Endothelial cell of umbilical vein (primary cell): ENCODE measurements at regions of chr10 and their contacts with region 1.

Region 1: DNA sequence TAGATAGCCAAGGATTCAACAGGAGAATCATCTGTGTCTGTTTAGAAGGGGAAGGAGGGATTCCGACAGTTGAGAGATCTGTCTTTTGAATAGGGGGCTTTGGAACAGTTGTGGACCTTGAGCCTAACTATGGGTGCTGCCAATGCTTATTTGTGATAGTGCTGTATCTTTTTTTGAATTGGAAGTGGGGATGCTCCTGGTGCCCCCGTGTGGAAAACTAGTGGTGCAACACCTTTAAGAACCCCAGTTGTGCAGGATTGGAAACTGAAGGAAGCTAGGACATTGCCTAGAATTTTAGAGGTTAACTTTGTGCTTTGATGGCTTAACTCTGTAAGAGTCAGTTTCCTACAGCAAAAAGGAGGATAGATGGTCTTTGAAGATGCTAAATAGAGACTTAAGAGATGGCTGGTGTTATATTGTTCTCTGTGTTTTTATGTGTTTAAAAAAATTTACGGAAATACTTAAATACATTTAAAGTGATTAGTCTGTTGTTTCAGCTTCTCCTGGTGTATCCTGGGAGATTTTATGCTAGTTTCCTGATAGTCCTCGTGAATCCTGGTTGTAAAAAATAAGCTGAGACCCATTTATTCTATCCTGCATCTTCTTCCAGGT is 69.3 kb downstream of the AP3M1 start:
- DNase-seq: peak; percentile 75
- H3K4me3 ChIP-seq: no peak overlapping the region
- H3K27ac ChIP-seq: peak overlapping the region; percentile 90
- H3K4me1 ChIP-seq: peaks cover 50% of the 10 kb centered on the region
- H3K27me3 ChIP-seq: no peaks in the 10 kb centered on the region
- CTCF ChIP-seq: peak; percentile 75 to 77
- POLR2A ChIP-seq: no peak

Region 2: DNA sequence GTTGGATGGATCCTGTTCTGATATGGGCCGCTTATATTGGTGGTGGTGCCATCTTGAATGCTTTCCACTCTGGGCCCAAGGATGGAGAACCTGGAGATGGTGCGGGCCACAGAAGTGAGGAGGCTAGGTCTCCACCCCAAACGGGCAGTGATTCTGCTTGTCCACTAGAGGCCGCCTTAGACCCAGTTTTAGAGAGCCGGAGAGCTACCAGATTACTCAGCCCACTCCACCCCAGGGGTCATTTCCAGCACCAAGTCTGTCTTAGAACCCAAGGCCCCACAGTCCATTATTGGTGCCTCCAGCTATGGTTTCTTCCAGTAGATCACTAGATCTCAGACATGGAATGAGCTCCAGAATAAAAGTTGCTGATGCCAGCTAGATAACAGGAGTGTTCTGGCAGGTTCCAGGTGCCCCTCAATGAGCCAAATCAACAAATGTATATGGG is 195.2 kb before region 1 on chr10:
- CTCF ChIA-PET with region 1: interaction called, 191 read pairs
- POLR2A ChIA-PET with region 1: interaction called, 3 read pairs
- dilution Hi-C with region 1: no loop called
- intact Hi-C with region 1: loop called (anchors 1 kb)
- DNase-seq: peak; percentile 72
- H3K4me3 ChIP-seq: no peak overlapping the region
- H3K27ac ChIP-seq: peak overlapping the region; percentile 88
- H3K4me1 ChIP-seq: peaks cover 26% of the 10 kb centered on the region
- H3K27me3 ChIP-seq: no peaks in the 10 kb centered on the region
- CTCF ChIP-seq: peak; percentile 82 to 88
- POLR2A ChIP-seq: no peak

Region 3: GRCh38 chr10:73991884-73992245 is 89.4 kb before region 1 on chr10:
- CTCF ChIA-PET with region 1: interaction called, 27 read pairs
- POLR2A ChIA-PET with region 1: no interaction called
- dilution Hi-C with region 1: no loop called
- intact Hi-C with region 1: no loop called
- DNase-seq: no peak
- H3K4me3 ChIP-seq: no peak overlapping the region
- H3K27ac ChIP-seq: no peak overlapping the region
- H3K4me1 ChIP-seq: peaks cover 10% of the 10 kb centered on the region
- H3K27me3 ChIP-seq: no peaks in the 10 kb centered on the region
- CTCF ChIP-seq: no peak
- POLR2A ChIP-seq: no peak

Region 4: GRCh38 chr10:74026428-74027015 is 54.8 kb before region 1 on chr10:
- CTCF ChIA-PET with region 1: interaction called, 21 read pairs
- POLR2A ChIA-PET with region 1: interaction called, 5 read pairs
- dilution Hi-C with region 1: no loop called
- intact Hi-C with region 1: no loop called
- DNase-seq: no peak
- H3K4me3 ChIP-seq: no peak overlapping the region
- H3K27ac ChIP-seq: no peak overlapping the region
- H3K4me1 ChIP-seq: peaks cover 12% of the 10 kb centered on the region
- H3K27me3 ChIP-seq: no peaks in the 10 kb centered on the region
- CTCF ChIP-seq: no peak
- POLR2A ChIP-seq: no peak

Region 5: DNA sequence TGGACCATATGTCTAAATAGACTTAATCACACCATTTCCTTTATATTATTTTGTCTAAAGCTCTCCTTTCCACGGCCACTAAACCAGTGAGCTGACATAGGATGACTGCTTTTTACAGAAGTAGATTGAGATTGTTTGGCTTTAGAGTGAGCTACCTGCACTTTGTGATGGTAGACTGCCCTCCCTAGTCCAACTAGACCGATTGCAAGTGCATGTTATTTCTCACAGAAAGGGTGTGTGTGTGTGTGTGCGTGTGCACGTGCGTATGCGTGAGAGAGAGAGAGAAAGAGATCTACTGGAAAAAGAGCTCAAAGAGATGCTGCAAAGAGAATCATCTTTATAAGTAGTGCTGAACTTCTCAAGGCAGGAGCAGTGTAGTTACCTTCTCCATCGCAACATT is 22.6 kb before region 1 on chr10:
- CTCF ChIA-PET with region 1: interaction called, 34 read pairs
- POLR2A ChIA-PET with region 1: no interaction called
- dilution Hi-C with region 1: no loop called
- intact Hi-C with region 1: loop called (anchors 1 kb)
- DNase-seq: peak; percentile 39
- H3K4me3 ChIP-seq: no peak overlapping the region
- H3K27ac ChIP-seq: no peak overlapping the region
- H3K4me1 ChIP-seq: peaks cover 34% of the 10 kb centered on the region
- H3K27me3 ChIP-seq: no peaks in the 10 kb centered on the region
- CTCF ChIP-seq: no peak
- POLR2A ChIP-seq: no peak

Region 6: DNA sequence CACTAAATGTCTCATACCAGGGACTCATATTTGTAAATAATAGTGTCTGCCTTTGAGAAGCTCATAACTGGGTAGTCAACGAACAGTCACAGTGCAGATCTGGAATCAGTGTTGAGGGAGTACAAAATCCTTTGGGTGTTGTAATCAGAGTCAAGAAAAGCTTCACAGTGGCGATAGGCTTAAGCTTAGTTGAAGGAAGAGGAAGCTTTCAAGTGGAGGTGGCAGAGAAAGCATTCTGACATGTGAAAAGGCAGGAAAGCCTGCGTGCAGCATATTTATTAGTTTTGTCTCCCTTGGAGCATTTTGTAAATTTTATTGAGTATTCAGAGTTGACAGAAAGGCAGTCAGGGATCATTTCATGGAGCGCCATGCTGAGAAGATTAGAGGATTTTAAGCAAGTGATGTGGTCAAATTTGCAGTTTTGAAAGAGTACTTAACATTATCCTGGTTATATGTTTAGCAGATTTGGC is 174.6 kb after region 1 on chr10:
- CTCF ChIA-PET with region 1: no interaction called
- POLR2A ChIA-PET with region 1: no interaction called
- dilution Hi-C with region 1: no loop called
- intact Hi-C with region 1: no loop called
- DNase-seq: no peak
- H3K4me3 ChIP-seq: no peak overlapping the region
- H3K27ac ChIP-seq: no peak overlapping the region
- H3K4me1 ChIP-seq: peaks cover 2% of the 10 kb centered on the region
- H3K27me3 ChIP-seq: no peaks in the 10 kb centered on the region
- CTCF ChIP-seq: no peak
- POLR2A ChIP-seq: no peak